ENCODE measurements at regions of chr6 and their contacts with region 1.

Region 1: DNA sequence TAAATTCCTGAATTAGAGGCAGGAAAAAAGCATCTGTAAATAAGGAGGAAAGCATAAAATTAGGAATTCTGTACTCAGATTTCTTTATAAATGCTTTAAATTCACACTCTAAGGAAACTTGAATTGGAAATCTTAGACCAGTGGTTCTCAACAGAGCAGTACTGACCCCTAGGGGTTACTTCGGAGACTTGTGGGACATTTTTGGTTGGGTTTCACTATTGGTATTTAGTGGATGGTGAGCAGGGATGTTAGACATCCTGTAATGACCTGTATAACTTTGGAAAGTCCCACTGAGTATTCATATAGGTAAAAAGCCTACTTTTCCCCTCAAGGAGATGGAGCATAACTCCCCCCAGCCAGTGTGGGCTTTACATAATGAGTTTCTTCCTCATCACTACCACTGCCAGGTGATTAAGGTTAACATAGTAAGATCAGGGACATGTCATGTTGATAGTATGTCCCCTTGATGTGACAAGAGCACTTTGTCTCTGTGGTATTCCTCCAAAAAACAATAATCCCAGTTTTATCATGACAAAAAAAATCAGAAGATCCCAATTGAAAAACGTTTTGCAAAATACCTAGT is 31.0 kb downstream of the GLO1 start:
- DNase-seq: peak in 7 of 9 donors; percentile 19 to 41 (median 32)
- ATAC-seq: peak; percentile 84
- H3K4me3 ChIP-seq: no peak overlapping the region
- H3K4me3 Mint-ChIP-seq: no peak overlapping the region
- H3K27ac ChIP-seq: no peak overlapping the region
- H3K27ac Mint-ChIP-seq: no peak overlapping the region
- H3K4me1 ChIP-seq: peaks cover 0 to 4% of the 10 kb centered on the region in 2 donors
- H3K4me1 Mint-ChIP-seq: peaks cover 6 to 32% (median 13%) of the 10 kb centered on the region in 7 donors
- H3K27me3 ChIP-seq: no peaks in the 10 kb centered on the region
- H3K27me3 Mint-ChIP-seq: no peaks in the 10 kb centered on the region

Region 2: DNA sequence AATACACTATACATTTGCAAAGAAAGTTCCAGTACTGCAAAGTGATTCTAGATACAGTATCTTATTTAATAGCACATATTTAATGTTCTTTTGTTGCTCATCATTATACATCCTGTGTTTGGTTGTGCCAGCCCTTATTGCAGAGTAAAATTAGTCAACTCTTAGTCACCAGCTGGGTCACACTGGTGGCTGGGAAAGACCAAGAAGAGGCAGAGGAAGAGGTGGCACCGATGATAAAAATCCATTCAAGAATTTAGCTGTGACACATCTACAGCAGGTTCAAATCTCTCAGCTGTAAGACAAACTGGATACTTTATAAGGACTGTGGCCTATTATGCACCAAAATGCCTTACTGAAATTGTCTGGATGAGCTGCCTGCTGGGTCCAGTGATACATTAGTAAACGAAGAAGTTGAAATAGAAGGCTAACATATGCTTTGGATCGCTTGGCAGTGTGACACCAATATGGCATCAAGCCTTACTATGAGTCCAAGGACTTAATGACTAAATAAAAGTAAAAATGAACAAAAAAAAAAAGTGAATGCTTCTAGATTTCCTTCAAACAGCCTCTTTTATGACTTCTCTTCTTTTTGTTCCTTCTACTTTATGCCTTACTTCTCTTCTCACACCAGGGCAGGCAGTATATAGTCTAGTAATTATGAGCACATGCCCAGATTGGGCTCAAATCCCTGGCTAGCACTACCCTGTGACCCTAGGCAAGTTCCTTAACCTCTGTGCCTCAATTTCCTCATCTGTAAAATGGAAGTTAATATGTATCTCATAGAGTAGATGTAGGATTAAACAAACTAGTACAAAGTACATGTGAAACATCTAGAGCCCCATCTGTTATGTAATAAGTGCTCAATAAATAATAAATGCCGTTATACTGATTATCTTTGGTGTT is 1347.6 kb before region 1 on chr6:
- CTCF ChIA-PET with region 1: no interaction called
- POLR2A ChIA-PET with region 1: no interaction called
- intact Hi-C with region 1: loop called in 1 of 2 experiments (anchors 5 kb)
- DNase-seq: no peak
- ATAC-seq: no peak
- H3K4me3 ChIP-seq: no peak overlapping the region
- H3K4me3 Mint-ChIP-seq: no peak overlapping the region
- H3K27ac ChIP-seq: no peak overlapping the region
- H3K27ac Mint-ChIP-seq: peak overlapping the region in 5 of 9 donors; percentile 2 to 48 (median 11)
- H3K4me1 ChIP-seq: no peaks in the 10 kb centered on the region
- H3K4me1 Mint-ChIP-seq: peaks cover 0 to 16% (median 4%) of the 10 kb centered on the region in 7 donors
- H3K27me3 ChIP-seq: no peaks in the 10 kb centered on the region
- H3K27me3 Mint-ChIP-seq: no peaks in the 10 kb centered on the region

Region 3: DNA sequence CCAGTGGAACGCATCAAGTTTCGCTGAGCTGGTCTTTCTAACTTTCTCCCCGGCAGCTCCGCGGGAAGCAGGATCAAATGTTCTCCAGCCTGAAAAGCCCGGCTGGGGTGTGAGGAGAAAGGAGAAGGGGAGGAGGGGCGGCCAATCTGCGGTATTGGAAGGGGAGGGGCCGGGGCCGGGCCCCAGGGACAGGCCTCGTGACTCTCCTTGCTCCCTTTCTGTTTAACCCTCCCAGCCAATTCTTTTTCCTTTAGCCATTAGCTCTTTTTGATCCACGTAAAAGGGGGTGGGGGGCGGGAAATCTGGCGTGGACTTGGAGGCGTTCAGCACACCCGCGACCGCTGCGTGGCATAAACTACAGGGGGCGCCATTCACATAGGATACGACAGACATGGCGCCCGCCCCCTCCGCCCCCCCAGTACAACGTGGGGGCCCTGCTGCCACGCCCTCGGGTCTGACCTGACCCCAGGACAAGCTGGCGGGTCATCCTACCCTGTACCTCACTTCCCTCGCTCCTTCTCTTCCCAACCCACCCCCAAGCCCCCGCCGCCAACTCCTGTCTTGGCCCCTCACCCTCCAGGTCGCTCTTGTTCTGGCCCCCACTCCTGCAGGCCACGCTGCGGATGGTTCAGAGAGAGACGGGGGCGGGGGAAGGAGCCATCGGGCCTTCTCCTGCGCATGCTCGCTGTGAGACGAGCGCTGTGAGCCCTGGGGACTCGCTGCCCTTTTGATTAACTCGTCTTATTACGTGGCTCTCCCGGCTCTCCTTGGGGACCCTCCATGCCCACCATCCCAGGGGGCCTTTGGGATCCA is 966.5 kb before region 1 on chr6:
- CTCF ChIA-PET with region 1: no interaction called
- POLR2A ChIA-PET with region 1: no interaction called
- intact Hi-C with region 1: loop called in 1 of 2 experiments (anchors 10 kb)
- DNase-seq: peak; percentile 37 to 82 (median 78)
- ATAC-seq: peak; percentile 86
- H3K4me3 ChIP-seq: peak overlapping the region; percentile 60
- H3K4me3 Mint-ChIP-seq: peak overlapping the region; percentile 79 to 90 (median 86)
- H3K27ac ChIP-seq: peak overlapping the region; percentile 46
- H3K27ac Mint-ChIP-seq: peak overlapping the region; percentile 55 to 91 (median 82)
- H3K4me1 ChIP-seq: peaks cover 5 to 6% of the 10 kb centered on the region in 2 donors
- H3K4me1 Mint-ChIP-seq: peaks cover 10 to 17% (median 14%) of the 10 kb centered on the region in 7 donors
- H3K27me3 ChIP-seq: no peaks in the 10 kb centered on the region
- H3K27me3 Mint-ChIP-seq: peaks cover 0 to 39% (median 0%) of the 10 kb centered on the region in 5 donors

Region 4: GRCh38 chr6:38034274-38034914 is 637.6 kb before region 1 on chr6:
- CTCF ChIA-PET with region 1: no interaction called
- POLR2A ChIA-PET with region 1: no interaction called
- intact Hi-C with region 1: loop called in 1 of 2 experiments (anchors 2 kb)
- DNase-seq: peak in 1 of 9 donors; percentile 8
- ATAC-seq: no peak
- H3K4me3 ChIP-seq: no peak overlapping the region
- H3K4me3 Mint-ChIP-seq: peak overlapping the region in 6 of 10 donors; percentile 8 to 54 (median 23)
- H3K27ac ChIP-seq: no peak overlapping the region
- H3K27ac Mint-ChIP-seq: peak overlapping the region in 3 of 9 donors; percentile 29 to 57 (median 52)
- H3K4me1 ChIP-seq: peaks cover 0 to 12% of the 10 kb centered on the region in 2 donors
- H3K4me1 Mint-ChIP-seq: peaks cover 22 to 82% (median 61%) of the 10 kb centered on the region in 7 donors
- H3K27me3 ChIP-seq: no peaks in the 10 kb centered on the region
- H3K27me3 Mint-ChIP-seq: no peaks in the 10 kb centered on the region

Region 5: DNA sequence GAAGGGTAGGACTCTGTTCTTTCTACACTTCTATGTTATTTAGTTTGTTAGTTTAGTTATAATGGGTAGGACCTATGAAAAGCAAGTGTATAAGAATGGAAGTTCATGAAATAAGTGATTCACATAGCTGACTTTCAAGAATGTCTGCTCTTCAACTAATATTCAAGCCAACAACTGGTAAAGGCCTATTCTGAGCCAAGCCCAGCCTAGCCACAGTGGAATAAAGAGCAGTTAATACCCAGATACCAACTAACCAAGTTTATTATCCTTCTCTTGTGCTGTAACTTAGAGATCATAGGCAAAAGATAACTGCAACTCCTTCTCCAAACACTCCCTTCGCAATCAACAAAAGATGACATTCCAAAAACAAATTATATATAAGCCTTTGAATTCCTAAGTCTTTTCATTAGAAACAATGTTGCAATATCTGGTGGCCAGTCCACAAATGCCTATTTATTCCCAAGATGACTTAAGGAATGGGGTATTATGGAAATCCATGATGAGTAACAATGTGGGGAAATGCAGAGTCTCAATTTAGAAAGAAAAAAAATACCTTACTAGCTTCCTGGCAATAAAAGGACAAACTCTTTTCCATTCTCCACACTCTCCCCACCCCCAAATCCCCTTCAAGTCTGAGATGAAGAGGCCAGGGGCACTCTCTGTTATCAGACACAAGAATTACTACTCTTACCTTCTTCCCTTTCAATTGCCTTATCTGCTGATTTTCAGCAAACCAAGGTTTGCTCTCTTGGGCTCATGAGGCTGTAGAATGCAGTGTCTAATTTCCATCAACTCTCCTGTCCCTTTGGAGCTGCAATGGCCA is 59.6 kb before region 1 on chr6:
- CTCF ChIA-PET with region 1: no interaction called
- POLR2A ChIA-PET with region 1: no interaction called
- intact Hi-C with region 1: no loop called
- DNase-seq: no peak
- ATAC-seq: no peak
- H3K4me3 ChIP-seq: no peak overlapping the region
- H3K4me3 Mint-ChIP-seq: no peak overlapping the region
- H3K27ac ChIP-seq: no peak overlapping the region
- H3K27ac Mint-ChIP-seq: peak overlapping the region in 1 of 9 donors; percentile 66
- H3K4me1 ChIP-seq: no peaks in the 10 kb centered on the region
- H3K4me1 Mint-ChIP-seq: peaks cover 0 to 53% (median 35%) of the 10 kb centered on the region in 7 donors
- H3K27me3 ChIP-seq: no peaks in the 10 kb centered on the region
- H3K27me3 Mint-ChIP-seq: no peaks in the 10 kb centered on the region

Region 6: GRCh38 chr6:38639498-38640215 is 32.3 kb before region 1 on chr6 and contains the start of gene BTBD9:
- CTCF ChIA-PET with region 1: no interaction called
- POLR2A ChIA-PET with region 1: no interaction called
- intact Hi-C with region 1: loop called in 1 of 2 experiments (anchors 2 kb)
- DNase-seq: peak; percentile 83 to 92 (median 90)
- ATAC-seq: peak; percentile 87
- H3K4me3 ChIP-seq: peak within 1 kb of the TSS; percentile 90
- H3K4me3 Mint-ChIP-seq: peak within 1 kb of the TSS; percentile 74 to 94 (median 90)
- H3K27ac ChIP-seq: peak within 1 kb of the TSS; percentile 94
- H3K27ac Mint-ChIP-seq: peak within 1 kb of the TSS; percentile 88 to 96 (median 91)
- H3K4me1 ChIP-seq: peaks cover 16 to 22% of the 10 kb centered on the region in 2 donors
- H3K4me1 Mint-ChIP-seq: peaks cover 40 to 65% (median 57%) of the 10 kb centered on the region in 7 donors
- H3K27me3 ChIP-seq: no peaks in the 10 kb centered on the region
- H3K27me3 Mint-ChIP-seq: no peaks in the 10 kb centered on the region
- total RNA-seq, gene BTBD9: 20.6 to 58.8 (median 43.6) TPM

Region 7: DNA sequence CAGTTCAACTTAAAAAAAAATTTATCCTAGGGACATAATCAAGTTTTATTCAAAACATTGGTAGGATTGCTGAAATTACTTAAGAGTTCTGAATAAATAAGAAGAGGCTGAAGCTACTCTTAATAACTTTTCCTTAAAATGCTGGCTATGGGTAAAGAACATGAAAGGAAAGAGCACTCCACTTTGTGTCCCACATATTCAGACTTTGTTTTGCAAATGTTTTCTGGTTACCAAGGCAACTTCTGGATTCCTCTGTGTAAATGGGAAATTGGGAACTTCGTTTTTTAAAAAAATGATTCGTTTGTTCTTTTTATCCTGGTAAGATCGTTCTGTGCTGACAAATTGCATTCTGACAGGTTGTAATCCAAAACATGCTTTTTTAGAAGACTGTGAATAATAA is 938.2 kb after region 1 on chr6:
- CTCF ChIA-PET with region 1: no interaction called
- POLR2A ChIA-PET with region 1: no interaction called
- intact Hi-C with region 1: no loop called
- DNase-seq: no peak
- ATAC-seq: no peak
- H3K4me3 ChIP-seq: no peak overlapping the region
- H3K4me3 Mint-ChIP-seq: no peak overlapping the region
- H3K27ac ChIP-seq: no peak overlapping the region
- H3K27ac Mint-ChIP-seq: no peak overlapping the region
- H3K4me1 ChIP-seq: no peaks in the 10 kb centered on the region
- H3K4me1 Mint-ChIP-seq: no peaks in the 10 kb centered on the region
- H3K27me3 ChIP-seq: no peaks in the 10 kb centered on the region
- H3K27me3 Mint-ChIP-seq: peaks cover 10 to 23% (median 20%) of the 10 kb centered on the region in 5 donors